ENCODE measurements at regions of chr11 and their contacts with region 1.

Region 1: DNA sequence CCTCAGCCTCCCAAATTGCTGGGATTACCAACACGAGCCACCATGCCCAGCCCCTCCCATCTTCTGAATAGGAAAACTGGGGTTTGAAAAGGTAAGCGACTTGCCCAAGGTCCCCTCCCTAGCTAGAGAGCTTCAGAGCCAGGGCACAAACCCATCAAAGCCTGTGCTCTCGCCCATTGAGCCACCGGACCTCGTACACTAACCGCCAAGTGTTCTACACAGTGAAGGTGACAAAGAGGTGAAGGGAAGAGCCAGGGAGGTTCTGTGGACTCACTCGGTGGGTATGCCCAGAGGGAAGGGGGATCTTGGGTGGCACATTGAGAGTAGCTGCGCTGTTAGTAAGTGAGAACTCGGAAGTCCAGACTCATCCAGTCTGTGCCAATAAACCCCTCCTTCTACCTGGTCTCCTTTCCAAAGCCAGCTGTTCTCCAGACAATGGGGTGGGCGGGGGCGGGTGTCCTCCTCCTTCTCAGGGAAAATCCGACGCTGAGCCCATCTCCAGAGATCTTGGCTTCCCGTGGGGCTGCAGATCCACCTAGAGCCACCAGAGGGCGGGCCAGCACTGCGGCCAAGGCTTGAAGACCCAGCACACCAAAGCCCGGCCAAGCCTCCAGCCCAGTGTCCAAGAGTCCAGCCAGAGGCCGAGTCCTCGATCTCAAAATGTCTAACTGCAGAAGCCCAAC is 3.2 kb upstream of the RTN4RL2 start:
- DNase-seq: peak; percentile 86
- ATAC-seq: peak; percentile 57
- H3K4me3 Mint-ChIP-seq: peak overlapping the region; percentile 48
- H3K27ac Mint-ChIP-seq: no peak overlapping the region
- H3K4me1 Mint-ChIP-seq: peaks cover 21% of the 10 kb centered on the region
- H3K27me3 Mint-ChIP-seq: peaks cover 34% of the 10 kb centered on the region
- CTCF ChIP-seq: peak; percentile 99

Region 2: GRCh38 chr11:57191314-57192219 is 265.5 kb before region 1 on chr11:
- CTCF ChIA-PET with region 1: no interaction called
- POLR2A ChIA-PET with region 1: no interaction called
- intact Hi-C with region 1: no loop called
- DNase-seq: no peak
- ATAC-seq: no peak
- H3K4me3 Mint-ChIP-seq: no peak overlapping the region
- H3K27ac Mint-ChIP-seq: no peak overlapping the region
- H3K4me1 Mint-ChIP-seq: no peaks in the 10 kb centered on the region
- H3K27me3 Mint-ChIP-seq: peaks cover 13% of the 10 kb centered on the region
- CTCF ChIP-seq: no peak

Region 3: DNA sequence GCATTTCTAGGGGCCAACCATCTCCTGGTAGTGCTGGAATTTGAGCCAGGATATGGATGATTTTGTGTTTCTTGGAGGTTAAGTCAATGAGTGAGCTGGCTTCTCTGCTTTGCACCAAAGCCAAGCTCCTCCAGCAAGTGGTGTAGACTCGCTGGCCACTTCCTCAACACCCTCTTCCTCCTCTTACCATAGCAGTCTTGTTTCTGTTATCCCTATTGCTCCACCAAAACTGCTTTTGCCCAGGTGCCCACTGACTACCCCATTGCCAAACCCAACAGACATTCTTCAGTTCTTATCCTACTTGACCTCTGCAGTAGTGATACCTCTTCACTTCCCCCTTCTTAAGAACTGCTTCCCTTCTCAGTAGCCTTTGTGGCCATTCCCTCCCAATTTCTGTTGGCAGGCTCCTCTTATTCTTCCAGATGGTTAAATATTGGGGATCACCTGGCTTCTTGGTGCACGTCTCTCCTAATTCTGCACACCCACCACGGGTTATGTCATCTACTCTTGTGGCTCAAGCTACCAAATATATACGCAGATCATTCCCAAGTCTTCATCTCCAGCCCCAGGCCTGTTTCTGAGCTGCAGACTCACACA is 59.6 kb before region 1 on chr11:
- CTCF ChIA-PET with region 1: interaction called, 13 read pairs
- POLR2A ChIA-PET with region 1: interaction called, 3 read pairs
- intact Hi-C with region 1: no loop called
- DNase-seq: no peak
- ATAC-seq: no peak
- H3K4me3 Mint-ChIP-seq: no peak overlapping the region
- H3K27ac Mint-ChIP-seq: no peak overlapping the region
- H3K4me1 Mint-ChIP-seq: no peaks in the 10 kb centered on the region
- H3K27me3 Mint-ChIP-seq: no peaks in the 10 kb centered on the region
- CTCF ChIP-seq: no peak

Region 4: DNA sequence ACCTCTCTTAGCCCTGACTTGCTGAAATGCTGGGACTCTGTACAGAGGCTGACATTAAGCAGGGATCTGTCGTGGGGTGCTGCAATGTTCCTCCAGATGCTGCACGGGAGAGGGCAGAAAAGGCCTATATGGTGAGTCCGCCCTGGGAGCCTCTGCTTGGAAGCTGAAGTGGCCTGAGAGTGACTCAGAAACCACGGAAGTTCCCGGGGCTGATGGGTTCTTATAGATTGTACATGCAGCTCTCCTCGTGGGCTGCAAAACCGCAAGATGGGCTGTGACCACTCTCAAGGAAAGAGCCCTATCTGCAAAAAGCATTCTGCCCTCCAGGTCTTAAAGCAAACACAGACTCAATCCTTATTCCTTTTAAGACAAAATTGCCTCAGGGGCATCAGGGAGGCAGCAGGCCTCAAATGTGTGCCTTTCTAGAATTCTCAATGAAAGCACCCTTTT is 24.4 kb before region 1 on chr11:
- CTCF ChIA-PET with region 1: interaction called, 84 read pairs
- POLR2A ChIA-PET with region 1: no interaction called
- intact Hi-C with region 1: no loop called
- DNase-seq: peak; percentile 71
- ATAC-seq: peak; percentile 68
- H3K4me3 Mint-ChIP-seq: no peak overlapping the region
- H3K27ac Mint-ChIP-seq: no peak overlapping the region
- H3K4me1 Mint-ChIP-seq: peaks cover 10% of the 10 kb centered on the region
- H3K27me3 Mint-ChIP-seq: no peaks in the 10 kb centered on the region
- CTCF ChIP-seq: no peak

Region 5: DNA sequence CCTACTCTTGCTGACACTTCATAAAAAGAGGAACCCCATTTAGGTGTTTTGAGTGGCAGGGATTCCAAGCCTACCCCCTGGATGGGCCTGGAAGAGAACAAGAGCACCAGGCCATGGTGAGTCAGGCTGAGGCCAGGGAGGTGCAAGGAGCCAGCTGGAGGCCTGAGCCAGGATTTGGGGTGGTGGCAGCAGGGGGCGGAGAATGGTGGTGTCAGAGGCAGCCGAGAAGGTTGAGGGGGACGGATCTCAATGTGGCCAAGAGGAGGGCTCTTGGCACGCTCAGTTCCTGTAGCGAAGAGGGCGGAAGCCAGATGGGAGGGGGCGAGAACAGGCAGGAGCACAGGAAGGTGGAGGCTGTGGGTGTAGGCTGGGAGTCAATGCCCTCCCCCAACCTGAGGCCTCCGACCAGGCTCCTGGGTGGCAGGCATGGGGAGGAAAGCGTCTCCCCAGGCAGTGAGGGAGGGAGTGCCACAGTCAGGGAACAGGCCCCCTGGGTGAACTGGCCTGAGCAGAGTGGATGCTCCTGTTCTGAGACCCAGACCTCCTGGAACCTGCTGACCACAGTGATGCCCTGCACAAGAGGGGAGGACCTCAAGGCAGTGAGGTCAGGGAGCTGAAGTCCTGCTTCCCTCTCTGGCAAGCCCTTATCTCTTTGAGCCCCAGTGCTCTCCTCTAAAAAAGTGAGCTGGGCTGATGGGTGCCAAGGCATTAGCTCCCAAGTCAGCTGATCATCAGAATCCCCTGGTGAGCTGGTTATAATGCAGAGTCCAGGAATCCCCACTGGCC is 17.1 kb after region 1 on chr11:
- CTCF ChIA-PET with region 1: interaction called, 254 read pairs
- POLR2A ChIA-PET with region 1: interaction called, 12 read pairs
- intact Hi-C with region 1: no loop called
- DNase-seq: peak; percentile 82
- ATAC-seq: peak; percentile 83
- H3K4me3 Mint-ChIP-seq: peak overlapping the region; percentile 40
- H3K27ac Mint-ChIP-seq: peak overlapping the region; percentile 77
- H3K4me1 Mint-ChIP-seq: peaks cover 28% of the 10 kb centered on the region
- H3K27me3 Mint-ChIP-seq: peaks cover 5% of the 10 kb centered on the region
- CTCF ChIP-seq: no peak

Region 6: DNA sequence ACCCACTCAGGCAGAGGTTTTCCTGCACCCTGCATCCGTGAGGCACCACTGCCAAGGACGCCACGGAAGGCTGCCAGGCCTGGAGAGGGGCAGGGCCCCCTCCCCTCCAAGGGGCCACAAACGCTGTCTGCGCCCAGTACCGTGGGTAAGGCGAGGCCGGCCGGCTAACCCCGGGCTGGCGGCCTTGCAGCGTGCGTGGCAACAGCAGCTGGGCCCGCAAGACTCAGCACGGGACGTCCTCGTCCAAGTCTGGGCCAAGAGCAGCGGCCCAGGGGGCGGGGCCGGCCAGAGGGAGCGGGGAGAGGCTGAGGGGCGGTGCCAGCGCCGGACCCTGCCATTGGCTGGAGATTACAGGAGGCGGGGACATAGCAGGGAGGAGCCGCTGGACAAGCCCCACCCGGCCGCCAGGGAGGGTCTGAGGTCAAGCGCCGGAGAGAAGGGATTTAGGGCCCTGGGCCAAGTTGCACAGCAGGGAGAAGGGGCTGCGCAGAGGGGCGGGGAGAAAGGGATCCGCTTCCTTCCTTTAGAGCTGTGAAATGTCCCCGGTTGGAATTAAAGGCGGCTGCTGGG is 42.4 kb after region 1 on chr11:
- CTCF ChIA-PET with region 1: interaction called, 114 read pairs
- POLR2A ChIA-PET with region 1: no interaction called
- intact Hi-C with region 1: no loop called
- DNase-seq: peak; percentile 61
- ATAC-seq: peak; percentile 93
- H3K4me3 Mint-ChIP-seq: no peak overlapping the region
- H3K27ac Mint-ChIP-seq: no peak overlapping the region
- H3K4me1 Mint-ChIP-seq: peaks cover 6% of the 10 kb centered on the region
- H3K27me3 Mint-ChIP-seq: no peaks in the 10 kb centered on the region
- CTCF ChIP-seq: no peak

Region 7: DNA sequence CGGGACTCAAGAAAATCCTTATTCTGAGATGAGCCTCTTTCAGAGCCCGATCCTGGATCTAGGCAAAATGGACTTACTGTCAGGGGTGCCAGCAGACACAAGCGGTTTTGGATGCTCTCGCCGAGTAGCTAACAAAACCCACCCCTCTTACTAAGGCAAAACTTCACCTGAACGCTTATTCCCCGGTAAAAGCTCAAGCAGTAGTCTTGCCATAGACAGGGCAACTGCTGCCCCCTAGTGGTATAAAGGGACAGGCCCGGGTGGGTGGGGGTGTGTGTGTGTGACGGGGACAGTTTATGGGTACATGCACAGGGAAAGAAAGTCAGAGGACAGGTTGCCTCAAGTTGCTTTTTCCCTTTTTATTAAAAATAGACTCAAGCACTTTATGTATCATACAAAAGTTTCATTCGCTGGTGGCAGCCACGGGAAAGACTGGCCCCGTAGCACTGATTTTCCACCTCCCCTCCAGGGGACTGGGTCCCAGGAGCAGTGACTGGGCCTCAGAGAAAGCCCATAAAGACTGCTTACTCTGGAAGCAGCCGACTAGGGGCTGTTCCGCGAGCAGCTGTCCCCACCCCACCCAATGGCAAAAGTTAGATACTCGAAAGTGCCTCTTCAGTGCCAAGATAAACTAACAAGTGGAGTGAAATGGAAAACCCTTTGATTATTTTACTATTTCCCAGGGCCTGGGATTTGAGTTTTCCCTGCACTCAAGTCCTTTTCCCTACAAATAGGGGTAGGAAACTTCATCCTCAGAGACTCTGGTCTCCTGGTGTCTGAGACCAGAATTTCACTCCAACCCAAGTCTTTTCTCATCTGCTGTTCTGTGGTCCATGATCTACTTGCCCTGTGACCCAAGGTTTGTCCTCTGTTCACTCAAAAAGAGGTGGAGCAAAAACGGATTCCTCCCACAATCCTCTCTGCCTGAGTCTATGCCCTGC is 187.9 kb after region 1 on chr11:
- CTCF ChIA-PET with region 1: interaction called, 28 read pairs
- POLR2A ChIA-PET with region 1: no interaction called
- intact Hi-C with region 1: no loop called
- DNase-seq: peak; percentile 93
- ATAC-seq: peak; percentile 71
- H3K4me3 Mint-ChIP-seq: no peak overlapping the region
- H3K27ac Mint-ChIP-seq: no peak overlapping the region
- H3K4me1 Mint-ChIP-seq: peaks cover 36% of the 10 kb centered on the region
- H3K27me3 Mint-ChIP-seq: peaks cover 48% of the 10 kb centered on the region
- CTCF ChIP-seq: peak; percentile 78

Measured in activated CD8-positive, alpha-beta T cell treated with anti-CD3 and anti-CD28 coated beads for 36 hours (primary cell).